Ovary (tissue), 10 donors: ENCODE measurements at regions of chr18 and their contacts with region 1.

Region 1: GRCh38 chr18:78957140-78957539 is 22.5 kb upstream of the SALL3 start:
- DNase-seq: no peak
- H3K4me3 ChIP-seq: no peak overlapping the region
- H3K27ac ChIP-seq: no peak overlapping the region
- H3K4me1 ChIP-seq: no peaks in the 10 kb centered on the region
- H3K27me3 ChIP-seq: no peaks in the 10 kb centered on the region
- CTCF ChIP-seq: no peak
- EP300 ChIP-seq: no peak
- POLR2A ChIP-seq: no peak

Region 2: DNA sequence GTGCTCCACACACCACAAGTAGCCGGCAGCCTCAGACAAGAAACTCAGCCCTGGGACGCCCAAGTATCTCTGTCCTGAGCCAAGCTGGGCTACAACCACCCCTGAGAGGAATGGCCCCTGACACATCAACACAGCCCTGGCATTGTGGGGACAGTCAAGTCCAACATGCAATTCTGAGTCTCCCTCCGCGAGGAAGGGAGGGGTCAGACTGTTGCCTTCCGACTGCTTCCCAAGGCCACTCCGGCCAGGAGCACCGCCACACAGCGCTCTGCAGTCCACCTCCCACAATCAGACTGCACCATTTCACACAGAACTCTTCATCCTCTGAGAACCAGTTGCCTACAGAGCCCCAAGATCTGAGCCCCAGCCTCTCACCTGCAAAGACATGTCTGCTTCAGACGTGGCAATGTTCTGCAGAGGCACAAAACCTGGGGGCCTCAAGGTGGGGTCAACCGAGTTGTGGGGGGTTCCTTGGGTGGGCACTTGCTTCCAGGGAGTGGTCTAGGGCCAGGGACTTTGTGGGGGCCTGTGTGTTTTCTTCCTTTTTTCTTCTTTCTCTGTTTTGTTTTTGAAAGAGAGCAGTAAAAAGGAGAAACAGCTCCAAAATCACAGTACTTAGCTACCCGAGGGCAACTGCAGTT is 54.2 kb before region 1 on chr18:
- intact Hi-C with region 1: loop called in 1 of 4 experiments (anchors 10 kb)
- DNase-seq: no peak
- H3K4me3 ChIP-seq: no peak overlapping the region
- H3K27ac ChIP-seq: no peak overlapping the region
- H3K4me1 ChIP-seq: no peaks in the 10 kb centered on the region
- H3K27me3 ChIP-seq: no peaks in the 10 kb centered on the region
- CTCF ChIP-seq: no peak
- EP300 ChIP-seq: no peak
- POLR2A ChIP-seq: no peak

Region 3: GRCh38 chr18:78918707-78919106 is 38.4 kb before region 1 on chr18:
- intact Hi-C with region 1: no loop called
- DNase-seq: no peak
- H3K4me3 ChIP-seq: no peak overlapping the region
- H3K27ac ChIP-seq: no peak overlapping the region
- H3K4me1 ChIP-seq: no peaks in the 10 kb centered on the region
- H3K27me3 ChIP-seq: no peaks in the 10 kb centered on the region
- CTCF ChIP-seq: no peak
- EP300 ChIP-seq: no peak
- POLR2A ChIP-seq: no peak